Posterior cingulate gyrus (tissue), 11 donors: ENCODE measurements at regions of chr17 and their contacts with region 1.

Region 1: DNA sequence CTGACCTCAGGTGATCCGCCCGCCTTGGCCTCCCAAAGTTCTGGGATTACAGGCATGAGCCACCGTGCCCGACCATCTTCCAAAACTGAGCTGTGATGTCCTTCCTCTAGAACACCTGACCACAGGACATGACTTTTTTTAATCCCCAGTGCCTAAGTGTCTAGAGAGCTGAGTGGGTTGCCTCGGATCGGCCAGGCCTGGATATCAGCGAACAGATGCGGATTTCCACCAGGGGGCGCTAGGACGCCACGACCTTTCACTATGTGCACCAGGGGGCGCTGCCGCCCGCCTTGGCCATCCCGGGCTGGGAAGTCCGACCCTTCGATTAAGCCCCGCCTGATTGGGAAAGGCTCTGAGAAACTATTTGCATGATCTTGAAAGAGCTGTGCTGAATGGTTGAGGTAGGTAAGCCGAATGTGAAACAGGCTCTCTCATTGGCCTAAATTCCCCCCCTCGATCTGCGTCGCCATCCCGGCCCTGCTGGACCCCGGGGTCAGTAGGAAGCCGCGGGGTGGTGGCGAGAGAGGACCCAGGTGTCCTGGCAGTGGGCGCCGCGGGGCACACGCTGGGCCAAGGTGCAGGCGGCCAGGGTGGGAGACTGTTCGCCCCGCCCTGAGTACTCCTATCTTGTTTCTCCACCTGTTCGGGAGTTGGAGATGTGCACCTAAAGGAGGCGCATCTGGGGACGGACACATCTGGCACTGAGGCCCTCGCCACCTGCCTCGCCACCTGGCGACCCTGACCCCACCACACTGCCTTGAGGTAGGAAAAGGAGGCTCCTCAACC is at the start of gene ACBD4:
- DNase-seq: peak; percentile 89 to 99 (median 94)

Region 2: DNA sequence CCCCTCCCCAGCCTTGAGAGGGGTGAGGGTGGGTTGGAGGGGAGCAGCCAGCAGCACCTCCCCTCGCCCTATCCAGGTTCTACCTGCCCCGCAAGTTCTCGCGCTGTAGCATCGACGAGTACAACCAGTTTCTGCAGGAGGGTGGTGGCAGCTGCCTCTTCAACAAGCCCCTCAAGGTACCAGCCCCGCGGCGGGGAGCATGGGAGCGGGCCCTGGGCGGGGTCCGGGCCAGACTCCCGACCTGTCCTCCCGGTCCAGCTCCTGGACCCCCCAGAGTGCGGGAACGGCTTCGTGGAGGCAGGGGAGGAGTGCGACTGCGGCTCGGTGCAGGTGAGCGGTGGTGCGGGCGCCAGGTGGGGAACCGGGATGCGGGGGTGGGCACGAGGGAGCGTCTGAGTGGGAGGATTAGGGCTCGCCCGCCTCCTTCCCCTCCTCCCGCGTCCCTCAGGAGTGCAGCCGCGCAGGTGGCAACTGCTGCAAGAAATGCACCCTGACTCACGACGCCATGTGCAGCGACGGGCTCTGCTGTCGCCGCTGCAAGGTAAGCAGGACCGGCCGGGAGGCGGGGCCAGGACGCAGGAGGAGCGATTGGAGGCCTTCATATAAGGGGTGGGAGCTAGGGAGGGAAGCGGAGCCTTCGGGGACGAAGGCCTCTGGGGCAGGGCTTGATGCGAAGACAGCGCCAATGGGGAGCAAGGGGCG is 360.1 kb before region 1 on chr17:
- intact Hi-C with region 1: loop called (anchors 10 kb)
- DNase-seq: peak in 9 of 10 donors; percentile 90 to 99 (median 97)

Region 3: GRCh38 chr17:45098869-45099616 is 36.3 kb before region 1 on chr17:
- intact Hi-C with region 1: loop called (anchors 5 kb)
- DNase-seq: peak; percentile 67 to 97 (median 84)

Region 4: DNA sequence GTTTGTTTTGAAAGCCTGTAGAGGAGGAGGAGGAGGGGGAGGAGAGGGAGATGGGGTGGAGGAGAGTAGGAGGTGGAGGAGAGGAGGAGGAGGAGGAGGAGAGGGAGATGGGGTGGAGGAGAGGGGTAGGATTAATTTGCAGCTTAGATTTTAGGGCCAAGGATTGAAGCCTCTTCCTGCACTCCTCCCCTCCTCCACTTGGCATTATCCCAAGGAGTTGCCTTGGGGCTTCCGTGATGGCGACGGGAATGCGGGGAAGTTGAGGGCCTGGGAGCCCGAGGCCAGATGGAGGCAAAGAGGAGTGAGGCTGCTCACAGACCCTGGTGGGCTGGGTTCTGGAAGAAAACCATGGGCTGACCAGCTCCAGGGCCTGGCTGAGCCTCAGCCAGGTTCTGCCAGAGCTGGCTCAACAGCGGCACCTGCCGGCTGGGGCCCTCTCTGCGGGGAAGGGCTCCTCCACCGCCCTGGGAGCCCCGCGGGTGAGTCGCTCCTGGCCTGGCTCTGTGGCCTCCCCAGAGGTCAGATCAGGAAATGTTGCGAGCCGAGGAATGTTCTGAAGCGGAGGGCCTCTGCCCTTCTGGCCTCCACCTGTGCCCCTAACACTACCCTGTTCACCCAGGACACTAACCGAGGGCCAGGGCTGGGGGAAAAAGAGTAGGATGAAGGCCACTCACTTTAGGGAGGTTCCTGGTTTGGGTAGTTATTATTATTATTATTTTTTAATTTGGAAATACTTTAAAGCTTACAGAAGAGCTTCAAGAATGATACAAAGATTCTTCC is 62.4 kb after region 1 on chr17:
- intact Hi-C with region 1: loop called (anchors 1 kb)
- DNase-seq: peak; percentile 72 to 98 (median 92)